PC-9 (cell line): ENCODE measurements at regions of chr9 and their contacts with region 1.

Region 1: DNA sequence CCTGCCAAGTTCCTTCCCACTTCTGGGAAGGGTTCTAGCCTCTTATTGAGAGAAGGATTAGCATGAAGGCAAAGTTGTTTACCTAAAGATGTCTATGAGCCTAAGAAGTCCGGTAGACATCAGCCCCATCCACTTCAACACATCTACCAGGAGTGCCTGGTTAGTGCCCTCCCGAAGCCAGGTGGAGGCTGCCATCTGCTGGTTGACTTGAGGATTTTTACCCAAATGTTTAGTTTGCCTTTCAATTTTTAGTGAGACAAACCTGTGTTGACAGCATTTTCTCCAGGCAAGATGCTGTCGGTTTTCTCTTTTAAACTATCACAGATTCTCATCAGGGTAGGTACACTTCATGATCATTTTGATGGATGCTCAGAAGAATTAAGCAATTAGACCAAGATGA is 83.6 kb upstream of the TNFSF8 start:
- DNase-seq: peak; percentile 45 to 69
- H3K4me3 ChIP-seq: no peak overlapping the region
- H3K27ac ChIP-seq: no peak overlapping the region
- H3K4me1 ChIP-seq: no peaks in the 10 kb centered on the region
- H3K27me3 ChIP-seq: peaks cover 23% of the 10 kb centered on the region; the same call in 1 of the 2 replicates
- CTCF ChIP-seq: peak; percentile 94

Region 2: DNA sequence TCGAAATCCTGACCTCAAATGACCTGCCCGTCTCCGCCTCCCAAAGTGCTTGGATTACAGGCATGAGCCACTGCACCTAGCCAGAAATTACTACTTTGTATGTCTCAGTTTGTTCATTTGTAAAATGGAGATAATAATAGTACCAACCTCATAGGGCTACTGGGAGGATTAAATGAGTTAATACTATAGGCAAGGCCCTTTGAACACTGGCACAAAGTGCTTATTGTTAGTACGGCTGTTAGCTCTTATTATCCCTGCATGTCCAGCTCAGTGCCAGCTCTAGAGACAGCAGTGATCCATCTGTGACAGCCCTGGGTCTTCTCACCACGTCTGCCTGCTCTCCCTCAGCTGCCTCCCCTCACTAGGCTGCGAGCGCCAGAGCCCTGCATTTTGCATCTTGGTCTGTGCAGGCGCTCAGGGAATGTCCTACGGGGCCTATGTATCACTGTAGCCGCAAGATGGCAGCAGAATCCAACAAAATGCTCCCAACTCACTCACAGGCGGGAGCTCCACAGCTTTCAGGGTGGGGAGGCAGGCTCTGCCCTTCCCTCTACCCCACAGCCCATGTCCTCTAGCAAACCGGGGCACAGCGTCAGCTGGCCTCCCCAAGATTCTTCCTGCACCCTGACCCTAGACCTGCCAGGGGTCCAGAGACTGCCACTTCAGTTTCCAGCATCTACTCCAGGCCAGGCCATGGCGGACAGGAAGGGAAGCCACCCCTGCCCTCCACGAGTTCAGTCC is 608.5 kb before region 1 on chr9:
- CTCF ChIA-PET with region 1: no interaction called
- POLR2A ChIA-PET with region 1: no interaction called
- intact Hi-C with region 1: loop called (anchors 1 kb)
- DNase-seq: peak; percentile 59 to 76
- H3K4me3 ChIP-seq: no peak overlapping the region
- H3K27ac ChIP-seq: no peak overlapping the region
- H3K4me1 ChIP-seq: no peaks in the 10 kb centered on the region
- H3K27me3 ChIP-seq: no peaks in the 10 kb centered on the region
- CTCF ChIP-seq: peak; percentile 82

Region 3: DNA sequence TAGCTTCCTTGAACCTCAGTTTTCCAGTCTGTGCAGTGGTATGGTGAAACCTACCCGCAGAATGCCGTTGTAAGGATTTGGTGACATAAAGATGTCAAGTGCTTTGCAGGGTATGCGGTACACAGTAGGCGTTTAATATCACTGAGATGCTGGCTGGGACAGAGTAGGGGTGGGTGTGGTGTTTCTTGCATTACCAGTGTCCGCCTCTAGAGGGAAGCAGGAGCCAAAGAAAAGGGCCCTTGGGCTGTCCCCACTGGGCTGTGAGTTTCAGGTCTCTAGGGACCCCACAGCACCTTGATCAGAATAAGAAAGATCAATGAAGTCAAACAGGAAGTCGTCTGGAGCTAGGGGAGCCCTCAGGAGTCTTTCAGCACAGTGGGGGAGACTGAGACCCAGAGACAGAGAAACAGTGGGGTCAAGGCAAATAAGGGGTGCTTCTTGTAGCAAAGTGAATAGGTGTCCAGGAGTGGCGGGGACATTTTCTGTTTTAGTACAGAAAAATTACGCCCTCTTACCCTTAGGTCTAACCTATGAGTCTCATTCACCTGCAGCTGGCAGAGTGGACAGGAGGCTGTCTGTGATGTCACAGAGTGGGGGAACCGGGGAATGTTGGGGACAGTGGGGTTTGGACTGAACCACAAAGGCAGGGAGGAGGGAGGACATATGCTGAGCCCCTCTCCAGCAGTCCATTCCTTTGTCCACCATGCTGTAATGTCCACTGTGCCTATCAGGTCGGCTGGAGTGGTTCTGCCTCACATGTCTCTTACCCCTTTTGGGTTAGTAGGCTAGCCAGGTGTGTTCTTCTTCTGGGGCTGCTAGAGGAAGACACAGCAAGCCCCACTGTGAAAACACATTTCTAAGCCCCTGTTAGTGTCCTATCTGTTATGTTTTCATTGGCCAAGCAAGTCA is 351.7 kb before region 1 on chr9:
- CTCF ChIA-PET with region 1: interaction called, 4 read pairs
- POLR2A ChIA-PET with region 1: no interaction called
- intact Hi-C with region 1: loop called (anchors 1 kb)
- DNase-seq: peak in 1 of 2 experiments; percentile 58
- H3K4me3 ChIP-seq: no peak overlapping the region
- H3K27ac ChIP-seq: no peak overlapping the region
- H3K4me1 ChIP-seq: no peaks in the 10 kb centered on the region
- H3K27me3 ChIP-seq: no peaks in the 10 kb centered on the region
- CTCF ChIP-seq: peak; percentile 96

Region 4: GRCh38 chr9:114894801-114895433 is 119.1 kb before region 1 on chr9:
- CTCF ChIA-PET with region 1: no interaction called
- POLR2A ChIA-PET with region 1: no interaction called
- intact Hi-C with region 1: no loop called
- DNase-seq: peak; percentile 25 to 88
- H3K4me3 ChIP-seq: no peak overlapping the region
- H3K27ac ChIP-seq: peak overlapping the region; percentile 88
- H3K4me1 ChIP-seq: peaks cover 41% of the 10 kb centered on the region
- H3K27me3 ChIP-seq: no peaks in the 10 kb centered on the region
- CTCF ChIP-seq: no peak

Region 5: GRCh38 chr9:114906908-114907571 is 107.0 kb before region 1 on chr9:
- CTCF ChIA-PET with region 1: interaction called, 3 read pairs
- POLR2A ChIA-PET with region 1: no interaction called
- intact Hi-C with region 1: loop called (anchors 1 kb)
- DNase-seq: no peak
- H3K4me3 ChIP-seq: no peak overlapping the region
- H3K27ac ChIP-seq: no peak overlapping the region; the same call in 1 of the 2 replicates
- H3K4me1 ChIP-seq: peaks cover 26% of the 10 kb centered on the region
- H3K27me3 ChIP-seq: peaks cover 11% of the 10 kb centered on the region
- CTCF ChIP-seq: peak; percentile 68

Region 6: DNA sequence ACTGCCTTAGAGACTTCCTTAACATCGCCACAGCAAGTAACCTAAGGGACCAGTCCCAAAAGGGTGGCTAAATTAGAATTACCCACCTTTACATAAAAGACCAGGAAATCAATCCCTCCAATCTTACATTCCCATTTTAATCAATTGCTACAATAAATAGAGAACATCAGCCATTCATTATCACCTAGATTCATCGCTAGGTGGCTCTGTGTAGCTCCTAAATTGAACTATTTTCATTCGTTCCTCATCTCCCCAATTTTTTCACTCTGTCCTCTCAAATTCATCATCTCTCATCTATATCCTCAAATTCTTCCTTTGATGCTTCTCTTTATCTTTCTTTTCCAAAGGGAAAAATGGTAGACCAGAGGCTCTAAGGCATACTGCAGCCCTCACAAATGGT is 212.1 kb after region 1 on chr9:
- CTCF ChIA-PET with region 1: no interaction called
- POLR2A ChIA-PET with region 1: no interaction called
- intact Hi-C with region 1: loop called (anchors 5 kb)
- DNase-seq: no peak
- H3K4me3 ChIP-seq: no peak overlapping the region
- H3K27ac ChIP-seq: no peak overlapping the region
- H3K4me1 ChIP-seq: no peaks in the 10 kb centered on the region
- H3K27me3 ChIP-seq: no peaks in the 10 kb centered on the region
- CTCF ChIP-seq: peak; percentile 55